Psoas muscle (tissue), 8 donors: ENCODE measurements at regions of chr7 and their contacts with region 1.

Region 1: DNA sequence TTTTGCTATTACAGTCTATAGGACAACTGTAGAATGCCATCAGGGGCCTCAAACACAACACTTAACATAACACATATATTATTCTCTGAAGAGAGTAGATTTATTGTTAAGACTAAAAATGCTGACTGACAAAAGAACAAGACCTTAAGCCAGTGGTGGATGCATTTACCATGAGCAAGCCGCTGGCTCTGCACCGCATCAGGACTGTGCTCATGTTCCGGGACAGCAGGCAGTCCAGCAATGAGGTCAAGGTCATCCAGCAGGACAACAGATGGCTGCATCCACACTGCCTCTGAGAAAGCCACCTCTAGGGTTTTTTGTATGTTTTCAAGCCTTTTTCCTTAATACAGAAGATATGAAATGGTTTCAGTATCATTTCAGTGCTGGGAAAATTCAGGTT is 23.8 kb downstream of the PEX1 start:
- DNase-seq: no peak
- ATAC-seq: peak in 3 of 4 donors; percentile 61 to 86 (median 71)
- H3K4me3 ChIP-seq: no peak overlapping the region
- H3K27ac ChIP-seq: no peak overlapping the region
- H3K4me1 ChIP-seq: no peaks in the 10 kb centered on the region
- H3K27me3 ChIP-seq: no peaks in the 10 kb centered on the region
- CTCF ChIP-seq: no peak

Region 2: GRCh38 chr7:92075434-92076158 is 429.0 kb before region 1 on chr7:
- intact Hi-C with region 1: loop called (anchors 5 to 10 kb)
- DNase-seq: no peak
- ATAC-seq: no peak
- H3K4me3 ChIP-seq: no peak overlapping the region
- H3K27ac ChIP-seq: no peak overlapping the region
- H3K4me1 ChIP-seq: no peaks in the 10 kb centered on the region
- H3K27me3 ChIP-seq: no peaks in the 10 kb centered on the region
- CTCF ChIP-seq: no peak

Region 3: GRCh38 chr7:92255308-92255707 is 249.3 kb before region 1 on chr7:
- intact Hi-C with region 1: no loop called
- DNase-seq: no peak
- ATAC-seq: peak; percentile 62 to 79 (median 68)
- H3K4me3 ChIP-seq: no peak overlapping the region
- H3K27ac ChIP-seq: no peak overlapping the region
- H3K4me1 ChIP-seq: peaks cover 28% of the 10 kb centered on the region
- H3K27me3 ChIP-seq: no peaks in the 10 kb centered on the region
- CTCF ChIP-seq: no peak